Activated CD8-positive, alpha-beta memory T cell treated with anti-CD3 and anti-CD28 coated beads, Interleukin-2, amount 10 ng/mL, durations not matched to agents 7 days and 5 days (primary cell): ENCODE measurements at regions of chr3 and their contacts with region 1.

Region 1: GRCh38 chr3:4409415-4409814 is 57.7 kb downstream of the SUMF1 start:
- DNase-seq: peak; percentile 68
- ATAC-seq: peak; percentile 68
- H3K4me3 Mint-ChIP-seq: peak overlapping the region; percentile 58
- H3K27ac Mint-ChIP-seq: peak overlapping the region; percentile 95
- H3K4me1 Mint-ChIP-seq: peaks cover 58% of the 10 kb centered on the region
- H3K27me3 Mint-ChIP-seq: no peaks in the 10 kb centered on the region

Region 2: GRCh38 chr3:4125576-4125975 is 283.8 kb before region 1 on chr3:
- CTCF ChIA-PET with region 1: no interaction called
- DNase-seq: no peak
- ATAC-seq: no peak
- H3K4me3 Mint-ChIP-seq: no peak overlapping the region
- H3K27ac Mint-ChIP-seq: no peak overlapping the region
- H3K4me1 Mint-ChIP-seq: no peaks in the 10 kb centered on the region
- H3K27me3 Mint-ChIP-seq: no peaks in the 10 kb centered on the region

Region 3: DNA sequence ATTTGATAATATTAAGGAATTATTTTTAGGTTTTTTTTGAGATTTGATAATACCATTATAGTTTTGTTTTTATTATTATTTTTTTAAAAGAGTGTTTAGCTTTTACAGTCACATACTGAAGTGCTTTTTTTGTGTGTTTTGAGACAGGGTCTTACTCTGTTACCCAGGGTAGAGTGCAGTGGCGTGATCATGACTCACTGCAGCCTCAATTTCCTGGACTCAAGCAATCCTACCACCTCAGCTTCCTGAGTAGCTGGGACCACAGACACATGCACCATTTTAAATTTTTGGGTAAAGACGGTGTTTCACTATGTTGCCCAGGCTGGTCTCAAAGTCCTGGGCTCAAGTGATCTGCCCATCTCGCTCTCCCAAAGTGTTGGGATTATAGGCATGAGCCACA is 15.4 kb before region 1 on chr3:
- CTCF ChIA-PET with region 1: interaction called, 16 read pairs
- DNase-seq: peak; percentile 84
- ATAC-seq: peak; percentile 88
- H3K4me3 Mint-ChIP-seq: peak overlapping the region; percentile 17
- H3K27ac Mint-ChIP-seq: peak overlapping the region; percentile 92
- H3K4me1 Mint-ChIP-seq: peaks cover 52% of the 10 kb centered on the region
- H3K27me3 Mint-ChIP-seq: no peaks in the 10 kb centered on the region